ENCODE measurements at regions of chr11 and their contacts with region 1.

Region 1: DNA sequence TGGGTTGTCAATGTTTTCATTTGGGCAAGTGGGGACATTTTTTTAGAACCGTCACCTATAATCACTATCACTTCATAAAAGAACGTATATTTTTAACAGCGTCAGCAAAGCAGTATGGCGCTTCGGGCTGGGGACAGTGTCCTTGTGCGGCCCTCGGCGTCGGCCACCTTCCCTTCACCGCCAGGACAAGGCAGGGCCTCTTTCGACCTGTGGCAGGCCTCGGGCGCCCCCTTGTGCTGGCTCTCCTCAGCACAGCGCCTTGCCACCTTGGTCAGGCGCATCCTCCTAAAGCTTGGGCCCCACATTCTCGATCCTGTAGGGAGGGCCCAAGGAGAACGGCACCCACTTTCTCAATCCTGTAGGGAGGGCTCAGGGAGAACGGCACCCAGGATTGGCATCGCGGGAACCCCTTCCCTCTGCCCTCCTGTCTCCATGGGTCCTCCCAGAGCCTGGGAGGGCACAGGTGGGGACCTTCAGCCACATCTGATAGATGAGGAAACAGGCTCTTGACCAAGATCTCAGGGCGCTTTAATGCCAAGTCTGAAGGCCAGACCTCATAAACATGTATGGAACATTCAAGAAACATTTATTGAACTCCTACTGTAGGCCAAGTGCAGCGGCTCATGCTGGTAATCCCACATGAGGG is 11.5 kb upstream of the FADD start:
- DNase-seq: peak; percentile 70 to 86
- ATAC-seq: peak; percentile 88 to 94 (median 90)
- H3K4me3 ChIP-seq: no peak overlapping the region
- H3K27ac ChIP-seq: no peak overlapping the region
- H3K4me1 ChIP-seq: peaks cover 0 to 10% (median 0%) of the 10 kb centered on the region in 9 donors
- H3K27me3 ChIP-seq: peaks cover 0 to 5% (median 0%) of the 10 kb centered on the region in 7 donors
- CTCF ChIP-seq: peak; percentile 68 to 97 (median 92)

Region 2: DNA sequence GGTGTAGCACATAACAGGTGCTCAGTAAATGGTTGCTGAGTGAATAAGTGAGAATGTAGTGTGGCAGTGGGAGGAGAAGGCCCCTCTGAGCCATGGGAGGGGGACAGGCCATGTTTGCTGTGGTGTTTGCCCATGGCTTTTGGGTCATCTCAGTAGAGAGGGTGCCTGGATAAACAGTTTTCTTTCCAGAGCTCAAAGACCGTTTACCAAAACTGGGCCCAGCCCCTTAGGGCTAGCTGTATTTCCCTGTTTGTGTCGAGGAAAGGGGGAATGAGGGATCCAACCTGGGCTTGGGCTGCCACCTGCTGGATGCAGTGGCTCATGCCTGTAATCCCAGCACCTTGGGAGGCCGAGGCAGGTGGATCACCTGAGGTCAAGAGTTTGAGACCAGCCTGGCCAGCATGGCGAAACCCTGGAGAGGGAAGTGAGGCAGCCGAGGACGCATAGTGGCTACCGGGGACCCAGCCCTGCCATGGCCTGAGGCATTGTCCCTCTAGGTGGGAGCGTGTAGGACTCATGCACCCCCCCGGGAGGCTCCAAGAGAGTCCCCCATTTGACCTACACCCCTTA is 507.8 kb before region 1 on chr11:
- intact Hi-C with region 1: loop called in 9 of 10 experiments (anchors 1 to 5 kb)
- DNase-seq: no peak
- ATAC-seq: no peak
- H3K4me3 ChIP-seq: no peak overlapping the region
- H3K27ac ChIP-seq: no peak overlapping the region
- H3K4me1 ChIP-seq: peaks cover 0 to 8% (median 6%) of the 10 kb centered on the region in 9 donors
- H3K27me3 ChIP-seq: peaks cover 0 to 29% (median 14%) of the 10 kb centered on the region in 7 donors
- CTCF ChIP-seq: peak in 7 of 9 donors; percentile 24 to 32 (median 29)

Region 3: GRCh38 chr11:69704508-69705253 is 486.9 kb before region 1 on chr11:
- intact Hi-C with region 1: loop called in 1 of 10 experiments (anchors 5 kb)
- DNase-seq: no peak
- ATAC-seq: peak in 5 of 8 donors; percentile 35 to 61 (median 50)
- H3K4me3 ChIP-seq: peak overlapping the region in 9 of 10 donors; percentile 0 to 38 (median 17)
- H3K27ac ChIP-seq: no peak overlapping the region
- H3K4me1 ChIP-seq: peaks cover 5 to 40% (median 26%) of the 10 kb centered on the region in 9 donors
- H3K27me3 ChIP-seq: peaks cover 24 to 92% (median 83%) of the 10 kb centered on the region in 7 donors
- CTCF ChIP-seq: peak in 8 of 9 donors; percentile 7 to 64 (median 48)

Region 4: DNA sequence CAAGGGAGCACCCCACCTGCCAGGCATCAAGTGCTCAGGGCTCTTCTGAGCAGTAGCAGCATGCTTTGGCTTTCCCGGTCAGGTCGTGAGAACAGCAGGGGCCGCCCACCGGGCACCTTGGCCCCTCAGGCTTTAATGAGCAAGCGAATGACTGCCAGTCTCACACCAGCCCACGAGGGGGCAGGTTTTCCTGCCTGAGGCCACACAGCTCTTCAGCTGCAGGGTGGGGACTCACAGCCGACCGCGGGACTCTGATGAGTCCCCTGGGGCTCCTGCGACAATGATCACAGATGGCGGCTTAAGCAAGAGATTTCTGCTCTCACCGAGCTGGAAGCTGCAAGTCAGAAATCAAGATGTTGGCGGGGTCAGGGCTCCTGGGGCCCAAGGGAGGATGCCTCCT is 473.5 kb before region 1 on chr11:
- intact Hi-C with region 1: loop called in 1 of 10 experiments (anchors 5 kb)
- DNase-seq: peak; percentile 51 to 52
- ATAC-seq: peak in 6 of 8 donors; percentile 62 to 79 (median 72)
- H3K4me3 ChIP-seq: no peak overlapping the region
- H3K27ac ChIP-seq: no peak overlapping the region
- H3K4me1 ChIP-seq: peaks cover 0 to 5% (median 0%) of the 10 kb centered on the region in 9 donors
- H3K27me3 ChIP-seq: peaks cover 5 to 81% (median 63%) of the 10 kb centered on the region in 7 donors
- CTCF ChIP-seq: peak; percentile 27 to 61 (median 55)

Region 5: GRCh38 chr11:69918938-69919650 is 272.5 kb before region 1 on chr11:
- intact Hi-C with region 1: loop called (anchors 1 to 2 kb)
- DNase-seq: peak; percentile 80 to 86
- ATAC-seq: peak; percentile 63 to 79 (median 72)
- H3K4me3 ChIP-seq: peak overlapping the region in 3 of 10 donors; percentile 2 to 33 (median 9)
- H3K27ac ChIP-seq: peak overlapping the region in 9 of 10 donors; percentile 2 to 80 (median 56)
- H3K4me1 ChIP-seq: peaks cover 13 to 37% (median 32%) of the 10 kb centered on the region in 9 donors
- H3K27me3 ChIP-seq: peaks cover 0 to 21% (median 4%) of the 10 kb centered on the region in 7 donors
- CTCF ChIP-seq: peak; percentile 89 to 99 (median 96)

Measured in heart right ventricle (tissue), 16 donors.